Naive thymus-derived CD4-positive, alpha-beta T cell (primary cell): ENCODE measurements at regions of chr3 and their contacts with region 1.

Region 1: DNA sequence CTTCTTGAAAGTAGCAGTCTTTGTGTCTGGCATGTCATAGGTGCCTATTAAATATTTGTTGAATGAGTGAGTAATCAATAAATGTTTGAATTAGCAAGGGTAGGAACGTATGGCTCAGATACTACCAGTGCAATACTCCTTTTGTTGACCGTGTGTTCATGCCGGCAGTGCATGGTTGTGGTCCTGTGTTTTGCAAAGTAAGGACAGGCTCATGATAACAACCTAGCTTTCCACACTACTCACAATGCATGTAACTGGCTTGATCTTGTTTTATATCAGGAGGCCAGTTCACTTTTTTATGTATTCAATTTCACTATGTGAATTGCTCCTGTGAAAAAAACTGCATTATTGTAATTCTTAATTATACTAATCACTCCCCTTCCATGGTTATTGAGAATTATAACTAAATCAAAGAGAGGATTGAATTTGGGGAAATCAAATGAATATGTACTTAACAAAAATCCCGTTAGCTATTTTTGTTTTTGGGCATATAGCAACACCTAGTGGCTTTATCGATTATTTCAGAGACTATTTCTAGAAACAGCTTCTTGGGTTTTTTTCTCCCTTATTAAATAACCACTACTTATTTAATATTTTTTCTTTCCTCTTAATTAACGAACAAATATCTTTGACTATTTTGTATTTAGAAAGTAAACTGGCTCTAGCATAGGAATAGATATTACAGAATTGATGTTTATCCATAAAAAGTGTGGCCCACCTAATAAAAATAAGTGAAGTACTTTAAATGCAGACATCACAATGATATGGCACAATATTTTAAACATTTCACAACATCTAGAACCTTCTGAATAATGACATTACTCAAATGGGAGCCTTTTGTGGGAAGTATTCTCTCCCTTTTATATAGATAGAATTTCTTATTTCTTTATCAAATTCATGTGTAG is 218.5 kb downstream of the BBX start:
- DNase-seq: peak in 6 of 9 donors; percentile 3 to 42 (median 22)
- ATAC-seq: no peak
- H3K4me3 ChIP-seq: no peak overlapping the region
- H3K4me3 Mint-ChIP-seq: no peak overlapping the region
- H3K27ac ChIP-seq: no peak overlapping the region
- H3K27ac Mint-ChIP-seq: no peak overlapping the region
- H3K4me1 ChIP-seq: no peaks in the 10 kb centered on the region
- H3K4me1 Mint-ChIP-seq: peaks cover 0 to 12% (median 0%) of the 10 kb centered on the region in 7 donors
- H3K27me3 ChIP-seq: no peaks in the 10 kb centered on the region
- H3K27me3 Mint-ChIP-seq: no peaks in the 10 kb centered on the region

Region 2: DNA sequence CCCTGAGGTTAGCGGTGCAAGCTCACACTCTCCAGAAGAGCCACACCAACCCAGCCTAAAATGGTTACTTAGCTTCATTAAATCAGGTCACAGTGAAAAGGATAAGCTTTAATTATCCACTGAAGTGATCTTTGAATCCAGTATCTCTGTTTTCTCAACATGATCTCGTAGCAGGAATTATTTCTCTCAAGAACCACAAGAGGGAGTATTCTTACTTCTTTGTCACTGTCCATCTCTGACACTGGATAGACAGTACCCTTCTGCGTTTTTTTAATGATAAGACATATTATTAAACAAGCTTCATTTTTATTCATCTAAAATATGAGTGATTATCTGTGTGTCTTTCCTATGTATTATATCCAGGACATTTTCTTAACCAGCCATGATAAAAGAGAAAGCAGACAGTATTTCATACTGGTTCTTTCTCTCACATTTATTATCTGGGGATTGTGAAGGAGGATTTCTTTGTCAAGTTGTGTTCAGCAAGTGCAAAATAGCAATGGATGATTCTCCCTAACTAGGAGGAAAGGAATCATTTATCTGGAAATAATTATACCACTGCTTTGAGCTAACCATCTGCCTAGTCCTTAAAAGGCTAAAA is 469.4 kb before region 1 on chr3:
- CTCF ChIA-PET with region 1: interaction called, 4 read pairs
- POLR2A ChIA-PET with region 1: no interaction called
- intact Hi-C with region 1: loop called in 1 of 2 experiments (anchors 1 kb)
- DNase-seq: peak in 6 of 9 donors; percentile 1 to 43 (median 20)
- ATAC-seq: peak; percentile 64
- H3K4me3 ChIP-seq: no peak overlapping the region
- H3K4me3 Mint-ChIP-seq: no peak overlapping the region
- H3K27ac ChIP-seq: no peak overlapping the region
- H3K27ac Mint-ChIP-seq: no peak overlapping the region
- H3K4me1 ChIP-seq: no peaks in the 10 kb centered on the region
- H3K4me1 Mint-ChIP-seq: peaks cover 0 to 2% (median 0%) of the 10 kb centered on the region in 7 donors
- H3K27me3 ChIP-seq: peaks cover 0 to 3% of the 10 kb centered on the region in 2 donors
- H3K27me3 Mint-ChIP-seq: peaks cover 6 to 42% (median 25%) of the 10 kb centered on the region in 5 donors

Region 3: GRCh38 chr3:107574650-107575049 is 166.6 kb before region 1 on chr3:
- CTCF ChIA-PET with region 1: no interaction called
- POLR2A ChIA-PET with region 1: no interaction called
- intact Hi-C with region 1: loop called (anchors 1 to 5 kb)
- DNase-seq: peak in 1 of 9 donors; percentile 5
- ATAC-seq: peak; percentile 63
- H3K4me3 ChIP-seq: no peak overlapping the region
- H3K4me3 Mint-ChIP-seq: no peak overlapping the region
- H3K27ac ChIP-seq: no peak overlapping the region
- H3K27ac Mint-ChIP-seq: no peak overlapping the region
- H3K4me1 ChIP-seq: peaks cover 0 to 9% of the 10 kb centered on the region in 2 donors
- H3K4me1 Mint-ChIP-seq: peaks cover 10 to 61% (median 51%) of the 10 kb centered on the region in 7 donors
- H3K27me3 ChIP-seq: no peaks in the 10 kb centered on the region
- H3K27me3 Mint-ChIP-seq: no peaks in the 10 kb centered on the region

Region 4: GRCh38 chr3:107660306-107660976 is 80.8 kb before region 1 on chr3:
- CTCF ChIA-PET with region 1: interaction called, 29 read pairs
- POLR2A ChIA-PET with region 1: no interaction called
- intact Hi-C with region 1: loop called in 1 of 2 experiments (anchors 1 kb)
- DNase-seq: peak in 6 of 9 donors; percentile 11 to 43 (median 34)
- ATAC-seq: peak; percentile 67
- H3K4me3 ChIP-seq: no peak overlapping the region
- H3K4me3 Mint-ChIP-seq: no peak overlapping the region
- H3K27ac ChIP-seq: no peak overlapping the region
- H3K27ac Mint-ChIP-seq: no peak overlapping the region
- H3K4me1 ChIP-seq: peaks cover 0 to 13% of the 10 kb centered on the region in 2 donors
- H3K4me1 Mint-ChIP-seq: peaks cover 15 to 45% (median 31%) of the 10 kb centered on the region in 7 donors
- H3K27me3 ChIP-seq: no peaks in the 10 kb centered on the region
- H3K27me3 Mint-ChIP-seq: no peaks in the 10 kb centered on the region

Region 5: DNA sequence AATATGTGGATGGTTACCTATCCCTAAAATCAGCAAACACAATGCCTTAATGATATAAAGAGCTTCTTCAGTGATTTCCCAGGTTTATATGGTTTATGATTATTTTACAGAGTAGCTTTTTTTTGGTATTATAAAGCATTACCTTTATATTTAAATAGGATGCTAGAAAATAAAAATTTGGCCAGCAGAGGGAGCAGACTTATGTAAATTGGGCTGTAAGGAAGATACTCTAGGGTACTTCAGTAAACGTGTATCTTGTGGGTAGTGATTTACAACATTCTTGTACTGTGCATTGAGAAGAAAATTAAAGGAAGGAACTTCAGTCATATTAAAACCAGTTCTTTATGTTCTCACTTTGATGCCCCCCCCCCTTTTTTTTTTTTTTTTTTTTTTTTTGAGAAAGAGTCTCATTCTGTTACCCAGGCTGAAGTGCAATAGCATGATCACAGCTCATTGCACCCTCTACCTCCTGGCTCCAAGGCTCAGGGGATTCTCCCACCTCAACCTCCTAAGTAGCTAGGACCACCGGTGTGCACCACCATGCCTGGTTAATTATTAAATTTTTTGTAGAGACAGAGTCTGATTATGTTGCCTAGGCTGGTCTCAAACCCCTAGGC is 50.6 kb before region 1 on chr3:
- CTCF ChIA-PET with region 1: interaction called, 5 read pairs
- POLR2A ChIA-PET with region 1: interaction called, 9 read pairs
- intact Hi-C with region 1: loop called (anchors 1 kb)
- DNase-seq: peak in 7 of 9 donors; percentile 4 to 36 (median 32)
- ATAC-seq: peak; percentile 77
- H3K4me3 ChIP-seq: no peak overlapping the region
- H3K4me3 Mint-ChIP-seq: no peak overlapping the region
- H3K27ac ChIP-seq: no peak overlapping the region
- H3K27ac Mint-ChIP-seq: no peak overlapping the region
- H3K4me1 ChIP-seq: peaks cover 0 to 1% of the 10 kb centered on the region in 2 donors
- H3K4me1 Mint-ChIP-seq: peaks cover 2 to 42% (median 25%) of the 10 kb centered on the region in 7 donors
- H3K27me3 ChIP-seq: no peaks in the 10 kb centered on the region
- H3K27me3 Mint-ChIP-seq: no peaks in the 10 kb centered on the region